Heart left ventricle (tissue), 16 donors: ENCODE measurements at regions of chr15 and their contacts with region 1.

Region 1: DNA sequence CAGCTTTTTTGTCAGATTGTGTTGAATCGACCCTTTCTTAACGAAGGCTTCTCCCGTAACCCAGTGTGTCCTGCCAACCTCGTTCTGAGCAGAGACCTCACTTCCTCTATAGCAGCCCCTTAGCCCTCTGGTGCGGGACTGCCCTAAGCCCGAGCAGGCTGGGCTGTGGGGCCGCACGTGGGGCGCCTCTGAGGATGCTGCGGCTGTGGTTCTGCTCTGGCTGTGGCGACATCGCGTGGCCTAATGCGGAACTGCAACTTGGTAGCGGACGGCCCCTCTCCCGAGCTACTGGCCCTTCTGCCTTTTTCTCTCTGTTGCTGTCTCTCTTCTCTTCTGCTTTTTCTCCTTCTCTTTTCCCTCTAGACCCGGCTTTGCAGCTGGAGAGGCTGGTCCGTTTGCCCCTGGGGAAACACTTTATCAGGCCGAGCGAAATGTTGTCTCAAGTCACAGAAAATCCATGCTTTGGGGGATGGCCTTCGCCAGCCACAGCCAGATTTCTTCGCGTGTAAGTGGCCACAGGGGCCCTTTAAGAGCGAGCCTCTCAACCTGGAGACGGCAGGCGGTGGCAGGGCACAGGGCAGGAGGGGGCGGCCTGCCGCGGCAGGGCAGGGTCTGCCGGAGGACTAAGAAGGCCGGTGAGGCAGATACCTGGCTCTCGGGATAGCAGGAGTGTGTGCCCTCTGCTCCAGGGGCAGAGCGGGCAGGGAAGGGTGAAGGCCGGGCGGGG is 19.4 kb upstream of the KIF23 start:
- DNase-seq: peak; percentile 77 to 92 (median 81)
- ATAC-seq: peak; percentile 66 to 93 (median 90)
- H3K4me3 ChIP-seq: peak overlapping the region in 5 of 12 donors; percentile 10 to 39 (median 26)
- H3K27ac ChIP-seq: no peak overlapping the region
- H3K4me1 ChIP-seq: peaks cover 0 to 14% (median 7%) of the 10 kb centered on the region in 12 donors
- H3K27me3 ChIP-seq: peaks cover 0 to 5% (median 0%) of the 10 kb centered on the region in 9 donors
- CTCF ChIP-seq: peak; percentile 95 to 99 (median 97)
- POLR2A ChIP-seq: no peak

Region 2: DNA sequence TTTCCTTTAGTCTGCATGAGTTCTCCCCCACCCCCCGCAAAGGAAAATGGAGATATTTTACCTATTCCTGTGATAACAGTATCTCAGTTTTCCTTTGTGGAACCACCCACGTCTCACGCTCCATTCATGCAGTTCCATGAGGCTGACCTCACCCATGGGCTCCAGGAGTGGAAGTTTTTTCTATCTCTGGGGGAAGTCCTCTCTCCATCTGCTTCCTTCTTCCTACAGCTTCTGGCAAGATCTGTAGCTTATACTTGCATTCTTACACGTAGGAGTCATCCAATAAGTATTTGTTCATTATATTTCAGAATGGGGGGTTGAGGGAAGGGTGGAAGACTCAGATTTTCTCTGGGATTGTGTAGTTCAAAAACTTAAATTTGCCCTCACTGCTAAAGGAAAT is 240.0 kb before region 1 on chr15:
- intact Hi-C with region 1: loop called in 1 of 10 experiments (anchors 10 kb)
- DNase-seq: peak in 1 of 5 donors; percentile 37
- ATAC-seq: peak in 3 of 4 donors; percentile 33 to 90 (median 78)
- H3K4me3 ChIP-seq: no peak overlapping the region
- H3K27ac ChIP-seq: no peak overlapping the region
- H3K4me1 ChIP-seq: peaks cover 0 to 14% (median under 1%) of the 10 kb centered on the region in 12 donors
- H3K27me3 ChIP-seq: no peaks in the 10 kb centered on the region
- CTCF ChIP-seq: no peak
- POLR2A ChIP-seq: no peak

Region 3: DNA sequence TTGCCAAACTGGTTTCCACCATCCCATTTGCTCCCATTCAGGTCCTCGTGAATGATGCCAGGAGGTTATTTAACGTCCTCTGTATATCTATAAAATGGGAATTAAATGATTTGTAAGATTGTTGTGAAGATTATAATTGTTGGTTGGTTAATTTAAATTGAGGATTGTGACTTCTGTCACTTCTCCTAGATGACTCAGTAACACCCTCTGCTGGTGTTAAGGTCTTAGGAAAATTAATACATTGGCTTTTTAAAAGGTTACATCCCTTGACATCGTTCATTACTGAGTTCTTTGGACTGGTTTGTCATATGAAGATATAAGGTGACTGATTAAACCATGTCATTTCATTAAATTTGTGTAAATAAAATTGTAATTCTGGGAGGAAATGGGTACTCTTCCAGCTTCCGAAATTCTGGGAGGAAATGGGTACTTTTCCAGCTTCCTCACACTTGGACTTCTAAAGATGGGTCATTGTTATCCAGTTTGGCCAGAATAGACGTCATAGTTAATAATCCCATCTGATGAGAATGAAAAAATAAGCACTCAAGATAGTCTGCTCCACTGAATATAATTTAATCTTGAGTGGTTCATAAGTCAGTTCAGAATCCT is 129.3 kb before region 1 on chr15:
- intact Hi-C with region 1: loop called in 8 of 10 experiments (anchors 10 kb)
- DNase-seq: no peak
- ATAC-seq: no peak
- H3K4me3 ChIP-seq: no peak overlapping the region
- H3K27ac ChIP-seq: no peak overlapping the region
- H3K4me1 ChIP-seq: peaks cover 0 to 3% (median 0%) of the 10 kb centered on the region in 12 donors
- H3K27me3 ChIP-seq: no peaks in the 10 kb centered on the region
- CTCF ChIP-seq: peak; percentile 47 to 75 (median 65)
- POLR2A ChIP-seq: no peak

Region 4: GRCh38 chr15:69272139-69272538 is 122.6 kb before region 1 on chr15:
- intact Hi-C with region 1: loop called in 8 of 10 experiments (anchors 10 kb)
- DNase-seq: no peak
- ATAC-seq: no peak
- H3K4me3 ChIP-seq: no peak overlapping the region
- H3K27ac ChIP-seq: no peak overlapping the region
- H3K4me1 ChIP-seq: peaks cover 0 to 9% (median 0%) of the 10 kb centered on the region in 12 donors
- H3K27me3 ChIP-seq: no peaks in the 10 kb centered on the region
- CTCF ChIP-seq: no peak
- POLR2A ChIP-seq: no peak